Activated CD4-positive, alpha-beta memory T cell treated with anti-CD3 and anti-CD28 coated beads for 36 hours (primary cell): ENCODE measurements at regions of chr1 and their contacts with region 1.

Region 1: DNA sequence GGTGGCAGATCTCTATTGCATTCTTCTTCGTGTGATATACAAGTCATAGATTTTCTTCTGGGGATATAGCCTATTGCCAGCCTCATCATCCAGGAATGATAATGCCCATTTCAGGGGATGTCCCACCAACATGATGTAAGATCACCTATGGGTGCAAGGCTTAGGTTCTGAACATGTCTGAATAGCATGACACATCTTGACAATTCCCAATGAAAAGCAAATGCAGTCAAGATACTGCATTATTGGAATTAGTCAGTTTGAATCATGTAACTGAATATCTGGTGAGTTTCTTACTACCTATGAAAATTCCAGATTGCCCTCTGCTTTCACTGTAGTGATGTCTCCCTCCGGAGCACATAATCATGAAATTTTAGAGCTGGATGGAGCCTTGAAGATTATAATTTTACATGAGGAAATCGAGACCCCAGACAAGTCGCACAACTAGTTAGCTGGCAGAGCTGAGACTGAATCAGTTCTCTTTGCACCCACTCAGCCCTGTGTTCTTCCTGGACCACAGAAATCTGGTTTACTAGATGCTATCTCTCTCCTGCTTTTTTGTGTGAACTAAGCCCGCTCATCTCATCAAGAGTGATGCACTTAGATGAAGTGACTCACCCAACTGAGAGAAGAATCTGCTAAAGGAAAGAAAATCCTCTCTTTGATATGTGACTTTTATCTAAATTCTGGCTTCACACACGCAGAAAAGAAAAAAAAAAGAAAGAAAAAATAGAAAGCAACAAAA is 65.0 kb downstream of the WDR64 start:
- DNase-seq: peak; percentile 18
- H3K4me3 Mint-ChIP-seq: no peak overlapping the region
- H3K27ac Mint-ChIP-seq: no peak overlapping the region
- H3K4me1 Mint-ChIP-seq: peaks cover 13% of the 10 kb centered on the region
- H3K27me3 Mint-ChIP-seq: peaks cover 19% of the 10 kb centered on the region

Region 2: GRCh38 chr1:241677201-241677600 is 39.9 kb before region 1 on chr1:
- CTCF ChIA-PET with region 1: no interaction called
- POLR2A ChIA-PET with region 1: no interaction called
- intact Hi-C with region 1: loop called (anchors 1 kb)
- DNase-seq: no peak
- H3K4me3 Mint-ChIP-seq: no peak overlapping the region
- H3K27ac Mint-ChIP-seq: no peak overlapping the region
- H3K4me1 Mint-ChIP-seq: peaks cover 15% of the 10 kb centered on the region
- H3K27me3 Mint-ChIP-seq: peaks cover 2% of the 10 kb centered on the region

Region 3: GRCh38 chr1:241706954-241707365 is 10.1 kb before region 1 on chr1:
- CTCF ChIA-PET with region 1: no interaction called
- POLR2A ChIA-PET with region 1: no interaction called
- intact Hi-C with region 1: no loop called
- DNase-seq: no peak
- H3K4me3 Mint-ChIP-seq: no peak overlapping the region
- H3K27ac Mint-ChIP-seq: no peak overlapping the region
- H3K4me1 Mint-ChIP-seq: peaks cover 13% of the 10 kb centered on the region
- H3K27me3 Mint-ChIP-seq: no peaks in the 10 kb centered on the region

Region 4: DNA sequence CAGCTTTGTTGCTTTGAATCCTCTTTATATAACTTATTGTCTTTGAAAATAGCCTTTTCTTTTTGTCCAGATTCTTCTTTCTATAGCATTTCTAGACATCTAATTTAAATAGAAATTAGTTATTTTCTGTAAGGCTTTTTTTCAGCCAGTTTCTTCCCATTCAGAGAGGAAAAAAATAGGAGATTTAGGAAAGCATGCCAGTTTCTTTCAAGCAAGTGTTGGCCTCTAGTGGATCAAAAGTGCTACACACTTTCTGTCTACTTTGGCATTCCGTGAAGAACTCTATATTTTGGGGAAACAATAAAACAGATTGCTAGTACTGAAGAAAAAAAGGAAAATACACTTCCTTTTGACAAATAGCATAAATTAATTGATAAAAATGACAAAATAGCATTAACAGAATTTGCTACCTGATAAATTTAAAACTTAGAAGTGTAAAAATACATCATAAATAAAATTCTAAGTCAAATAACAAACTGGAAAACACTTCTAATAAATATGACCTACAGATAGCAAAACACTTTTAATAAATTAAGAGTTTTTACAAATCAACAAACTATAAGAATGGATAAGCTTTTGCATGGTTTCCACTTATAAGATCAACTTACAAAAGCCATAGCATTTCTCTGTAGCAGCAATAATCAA is 117.8 kb after region 1 on chr1:
- CTCF ChIA-PET with region 1: no interaction called
- POLR2A ChIA-PET with region 1: no interaction called
- intact Hi-C with region 1: no loop called
- DNase-seq: no peak
- H3K4me3 Mint-ChIP-seq: no peak overlapping the region
- H3K27ac Mint-ChIP-seq: no peak overlapping the region
- H3K4me1 Mint-ChIP-seq: peaks cover 2% of the 10 kb centered on the region
- H3K27me3 Mint-ChIP-seq: peaks cover 8% of the 10 kb centered on the region